Naive thymus-derived CD4-positive, alpha-beta T cell (primary cell): ENCODE measurements at regions of chr12 and their contacts with region 1.

Region 1: GRCh38 chr12:53005986-53006809 is at the start of gene EIF4B:
- DNase-seq: peak; percentile 91 to 100 (median 99)
- ATAC-seq: peak; percentile 96
- H3K4me3 ChIP-seq: peak within 1 kb of the TSS; percentile 99
- H3K4me3 Mint-ChIP-seq: peak within 1 kb of the TSS; percentile 96 to 100 (median 99)
- H3K27ac ChIP-seq: peak within 1 kb of the TSS; percentile 86
- H3K27ac Mint-ChIP-seq: peak within 1 kb of the TSS; percentile 96 to 99 (median 98)
- H3K4me1 ChIP-seq: peaks cover 32 to 36% of the 10 kb centered on the region in 2 donors
- H3K4me1 Mint-ChIP-seq: peaks cover 26 to 59% (median 46%) of the 10 kb centered on the region in 7 donors
- H3K27me3 ChIP-seq: no peaks in the 10 kb centered on the region
- H3K27me3 Mint-ChIP-seq: peaks cover 0 to 9% (median 0%) of the 10 kb centered on the region in 5 donors
- total RNA-seq, gene EIF4B: 380 to 919 (median 833) TPM

Region 2: DNA sequence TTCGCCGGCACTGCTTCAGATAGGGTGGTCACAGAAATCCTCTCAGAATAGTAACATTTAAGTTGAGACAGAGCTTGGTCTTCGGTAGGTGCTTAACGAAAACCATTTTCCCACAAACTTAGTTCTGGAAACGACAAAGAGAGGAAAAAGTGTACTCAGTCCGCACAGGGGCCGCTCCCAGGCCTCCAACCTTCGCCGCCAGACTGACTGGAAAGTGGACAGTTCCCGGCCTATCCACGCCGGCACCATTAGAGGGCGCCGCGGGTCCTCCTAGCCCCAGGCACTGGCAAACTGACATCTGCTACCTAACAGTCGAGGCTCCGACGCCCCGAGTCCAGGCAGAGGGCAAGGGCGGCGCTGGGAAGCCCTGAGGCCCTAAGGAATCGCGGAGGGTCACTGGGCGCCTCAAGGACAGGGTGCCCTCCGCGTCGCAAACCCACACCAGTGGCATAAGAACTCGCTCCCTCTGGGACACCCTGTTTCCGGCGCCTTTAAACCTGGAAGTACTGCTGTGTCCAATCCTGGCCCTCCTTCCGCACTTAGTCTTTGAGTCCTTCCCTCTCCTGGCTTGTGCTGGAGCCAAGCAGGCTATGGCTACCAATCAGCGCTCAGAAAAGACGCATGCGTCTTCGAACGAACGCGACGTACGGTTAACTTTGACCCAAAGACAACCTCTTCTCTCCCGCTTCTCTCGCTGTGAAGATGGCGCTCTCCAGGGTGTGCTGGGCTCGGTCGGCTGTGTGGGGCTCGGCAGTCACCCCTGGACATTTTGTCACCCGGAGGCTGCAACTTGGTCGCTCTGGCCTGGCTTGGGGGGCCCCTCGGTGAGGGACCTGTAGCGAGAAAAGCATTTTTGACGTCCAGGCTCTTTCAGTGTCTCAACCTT is 1958.3 kb before region 1 on chr12 and contains the start of gene LETMD1:
- CTCF ChIA-PET with region 1: no interaction called
- POLR2A ChIA-PET with region 1: no interaction called
- intact Hi-C with region 1: loop called in 1 of 2 experiments (anchors 10 kb)
- DNase-seq: peak; percentile 81 to 96 (median 95)
- ATAC-seq: peak; percentile 97
- H3K4me3 ChIP-seq: peak within 1 kb of the TSS; percentile 75
- H3K4me3 Mint-ChIP-seq: peak within 1 kb of the TSS; percentile 93 to 98 (median 96)
- H3K27ac ChIP-seq: peak within 1 kb of the TSS; percentile 81
- H3K27ac Mint-ChIP-seq: peak within 1 kb of the TSS; percentile 93 to 99 (median 96)
- H3K4me1 ChIP-seq: peaks cover 20 to 23% of the 10 kb centered on the region in 2 donors
- H3K4me1 Mint-ChIP-seq: peaks cover 15 to 44% (median 36%) of the 10 kb centered on the region in 7 donors
- H3K27me3 ChIP-seq: no peaks in the 10 kb centered on the region
- H3K27me3 Mint-ChIP-seq: no peaks in the 10 kb centered on the region
- total RNA-seq, gene LETMD1: 58.8 to 101 (median 77.0) TPM

Region 3: GRCh38 chr12:52050761-52051541 is 955.2 kb before region 1 on chr12 and contains the start of gene NR4A1:
- CTCF ChIA-PET with region 1: no interaction called
- POLR2A ChIA-PET with region 1: no interaction called
- intact Hi-C with region 1: loop called in 1 of 2 experiments (anchors 5 kb)
- DNase-seq: peak; percentile 98 to 100 (median 99)
- ATAC-seq: peak; percentile 96
- H3K4me3 ChIP-seq: peak within 1 kb of the TSS; percentile 71
- H3K4me3 Mint-ChIP-seq: peak within 1 kb of the TSS; percentile 90 to 98 (median 94)
- H3K27ac ChIP-seq: peak within 1 kb of the TSS; percentile 93
- H3K27ac Mint-ChIP-seq: peak within 1 kb of the TSS; percentile 59 to 100 (median 99)
- H3K4me1 ChIP-seq: peaks cover 21 to 22% of the 10 kb centered on the region in 2 donors
- H3K4me1 Mint-ChIP-seq: peaks cover 23 to 41% (median 37%) of the 10 kb centered on the region in 7 donors
- H3K27me3 ChIP-seq: no peaks in the 10 kb centered on the region
- H3K27me3 Mint-ChIP-seq: peaks cover 0 to 9% (median 0%) of the 10 kb centered on the region in 5 donors
- total RNA-seq, gene NR4A1: 0.89 to 279 (median 7.1) TPM

Region 4: GRCh38 chr12:52789637-52790426 is 216.4 kb before region 1 on chr12:
- CTCF ChIA-PET with region 1: no interaction called
- POLR2A ChIA-PET with region 1: no interaction called
- intact Hi-C with region 1: no loop called
- DNase-seq: peak in 1 of 9 donors; percentile 5
- ATAC-seq: no peak
- H3K4me3 ChIP-seq: no peak overlapping the region
- H3K4me3 Mint-ChIP-seq: peak overlapping the region in 8 of 10 donors; percentile 5 to 65 (median 50)
- H3K27ac ChIP-seq: no peak overlapping the region
- H3K27ac Mint-ChIP-seq: peak overlapping the region in 2 of 9 donors; percentile 28 to 62
- H3K4me1 ChIP-seq: peaks cover 0 to 5% of the 10 kb centered on the region in 2 donors
- H3K4me1 Mint-ChIP-seq: peaks cover 8 to 36% (median 26%) of the 10 kb centered on the region in 7 donors
- H3K27me3 ChIP-seq: no peaks in the 10 kb centered on the region
- H3K27me3 Mint-ChIP-seq: peaks cover 20 to 54% (median 27%) of the 10 kb centered on the region in 5 donors

Region 5: GRCh38 chr12:52942066-52942900 is 63.9 kb before region 1 on chr12:
- CTCF ChIA-PET with region 1: no interaction called
- POLR2A ChIA-PET with region 1: no interaction called
- intact Hi-C with region 1: no loop called
- DNase-seq: no peak
- ATAC-seq: no peak
- H3K4me3 ChIP-seq: no peak overlapping the region
- H3K4me3 Mint-ChIP-seq: no peak overlapping the region
- H3K27ac ChIP-seq: no peak overlapping the region
- H3K27ac Mint-ChIP-seq: no peak overlapping the region
- H3K4me1 ChIP-seq: no peaks in the 10 kb centered on the region
- H3K4me1 Mint-ChIP-seq: no peaks in the 10 kb centered on the region
- H3K27me3 ChIP-seq: no peaks in the 10 kb centered on the region
- H3K27me3 Mint-ChIP-seq: peaks cover 0 to 28% (median 5%) of the 10 kb centered on the region in 5 donors

Region 6: DNA sequence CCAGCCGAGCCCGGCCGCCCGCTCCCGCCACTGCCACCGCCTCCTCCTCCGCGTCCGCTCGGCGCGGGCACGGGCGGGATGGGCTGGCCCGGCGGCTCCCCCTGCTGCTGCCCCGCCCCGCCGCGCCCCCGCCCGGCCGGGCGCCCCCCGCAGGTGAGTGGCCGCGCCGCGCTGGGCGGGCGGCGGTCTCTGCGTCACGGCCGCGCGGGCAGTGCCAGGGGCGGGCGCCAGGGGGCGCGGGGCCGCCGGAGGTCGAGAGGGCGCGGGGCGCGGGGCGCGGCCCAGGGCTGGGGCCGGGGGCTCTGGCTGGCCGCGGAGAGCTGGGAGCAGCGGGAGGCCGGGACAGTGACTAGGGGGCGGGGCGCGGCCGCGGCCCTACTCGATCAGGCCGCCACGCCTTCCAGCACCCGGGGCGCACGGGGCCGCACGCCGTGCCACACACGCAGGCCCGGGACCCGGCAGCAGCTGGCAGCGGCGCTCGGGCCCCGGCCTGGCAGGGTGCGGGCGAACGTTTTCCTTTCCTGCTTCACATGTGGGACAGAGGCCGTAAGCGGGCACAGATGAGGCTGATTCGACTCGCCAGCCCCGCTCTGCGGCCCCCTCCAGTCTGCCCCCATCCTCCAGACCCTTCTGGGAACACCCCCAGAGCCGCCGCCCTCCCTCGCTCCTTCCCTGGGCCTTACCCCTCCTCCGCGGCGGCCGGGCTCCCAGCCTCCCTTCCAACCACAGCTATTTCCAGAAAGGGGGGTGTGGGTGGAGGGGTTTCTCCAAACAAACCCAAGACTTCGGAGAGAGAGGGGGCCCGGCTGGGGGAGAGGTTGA is 41.2 kb after region 1 on chr12:
- CTCF ChIA-PET with region 1: no interaction called
- POLR2A ChIA-PET with region 1: interaction called, 16 read pairs
- intact Hi-C with region 1: loop called in 1 of 2 experiments (anchors 1 kb)
- DNase-seq: peak; percentile 53 to 86 (median 70)
- ATAC-seq: peak; percentile 91
- H3K4me3 ChIP-seq: peak overlapping the region; percentile 82
- H3K4me3 Mint-ChIP-seq: peak overlapping the region in 9 of 10 donors; percentile 43 to 95 (median 76)
- H3K27ac ChIP-seq: peak overlapping the region; percentile 78
- H3K27ac Mint-ChIP-seq: peak overlapping the region in 6 of 9 donors; percentile 12 to 92 (median 82)
- H3K4me1 ChIP-seq: peaks cover 7 to 9% of the 10 kb centered on the region in 2 donors
- H3K4me1 Mint-ChIP-seq: peaks cover 0 to 24% (median 13%) of the 10 kb centered on the region in 7 donors
- H3K27me3 ChIP-seq: no peaks in the 10 kb centered on the region
- H3K27me3 Mint-ChIP-seq: peaks cover 0 to 13% (median 0%) of the 10 kb centered on the region in 5 donors

Region 7: DNA sequence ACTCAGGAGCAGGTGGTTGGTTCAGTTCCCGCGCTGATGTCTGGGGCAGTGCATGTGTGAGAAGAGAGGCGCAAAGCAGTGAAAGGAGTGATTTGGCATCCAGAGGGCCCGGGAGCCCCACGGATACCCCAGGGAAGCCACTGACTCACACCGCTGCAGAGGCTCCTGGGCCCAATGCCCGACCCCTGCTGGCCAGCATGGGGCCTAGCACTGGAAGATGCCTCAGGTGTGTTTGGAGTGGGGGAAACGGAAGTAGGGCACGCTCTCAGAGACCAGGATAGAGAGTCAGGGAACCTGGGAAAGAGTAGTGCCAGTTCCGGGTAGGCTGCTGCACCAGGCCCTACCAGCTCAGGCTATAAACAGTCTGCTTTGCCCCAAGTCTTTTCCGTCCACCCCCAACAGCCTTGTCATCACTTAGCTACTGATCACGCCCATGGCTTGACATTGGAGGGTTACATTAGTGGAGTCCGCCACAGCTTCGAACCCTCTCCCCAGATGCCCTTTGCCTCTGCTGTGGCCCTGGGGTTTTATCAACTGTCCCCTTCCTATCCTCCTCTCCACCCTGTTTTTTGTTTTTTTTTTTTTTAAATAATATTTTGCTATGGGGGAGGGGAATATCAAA is 184.0 kb after region 1 on chr12:
- CTCF ChIA-PET with region 1: no interaction called
- POLR2A ChIA-PET with region 1: no interaction called
- intact Hi-C with region 1: no loop called
- DNase-seq: peak in 7 of 9 donors; percentile 42 to 57 (median 52)
- ATAC-seq: peak; percentile 85
- H3K4me3 ChIP-seq: no peak overlapping the region
- H3K4me3 Mint-ChIP-seq: peak overlapping the region in 1 of 10 donors; percentile 25
- H3K27ac ChIP-seq: peak overlapping the region; percentile 37
- H3K27ac Mint-ChIP-seq: peak overlapping the region in 8 of 9 donors; percentile 36 to 89 (median 68)
- H3K4me1 ChIP-seq: peaks cover 0 to 11% of the 10 kb centered on the region in 2 donors
- H3K4me1 Mint-ChIP-seq: peaks cover 9 to 55% (median 30%) of the 10 kb centered on the region in 7 donors
- H3K27me3 ChIP-seq: no peaks in the 10 kb centered on the region
- H3K27me3 Mint-ChIP-seq: no peaks in the 10 kb centered on the region

Region 8: DNA sequence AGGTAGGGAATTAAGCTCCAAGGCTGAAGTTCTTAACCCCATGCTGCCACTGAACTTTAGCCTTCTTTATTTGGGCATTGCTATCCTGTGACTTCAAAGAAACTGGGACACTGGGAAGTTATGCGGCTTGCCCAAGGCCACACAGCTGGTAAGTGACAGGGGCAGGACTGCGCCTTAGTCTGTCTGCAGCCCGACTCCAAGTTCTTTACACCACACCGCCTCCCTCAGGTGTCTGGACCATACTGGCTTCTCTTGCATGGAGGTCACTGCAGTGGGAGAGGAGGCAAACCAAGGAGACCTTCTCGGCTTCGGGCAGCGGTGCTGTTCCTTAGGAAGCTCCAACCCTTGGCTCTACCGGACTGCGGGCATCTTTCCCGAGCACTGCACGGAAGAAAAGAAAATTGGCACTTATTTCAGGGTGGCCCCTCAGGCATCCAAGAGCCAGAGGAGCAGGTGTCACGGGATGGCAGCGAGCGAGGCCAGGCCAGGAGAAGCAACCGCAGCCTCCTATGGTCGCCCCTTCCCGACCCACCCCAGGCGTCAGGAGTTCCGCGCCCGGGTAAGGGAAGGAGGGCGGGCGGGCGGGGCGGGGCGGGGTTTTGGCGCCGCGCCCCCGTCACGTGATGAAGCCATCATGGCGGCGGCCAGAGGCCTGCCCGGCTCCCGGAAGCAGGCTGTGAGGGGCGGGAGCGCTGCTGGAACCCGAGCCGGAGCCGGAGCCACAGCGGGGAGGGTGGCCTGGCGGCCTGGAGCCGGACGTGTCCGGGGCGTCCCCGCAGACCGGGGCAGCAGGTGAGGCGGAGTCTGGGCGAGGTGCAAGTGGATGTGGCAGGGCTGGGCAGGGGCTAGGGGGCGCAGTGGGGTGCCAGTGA is 245.5 kb after region 1 on chr12:
- CTCF ChIA-PET with region 1: no interaction called
- POLR2A ChIA-PET with region 1: no interaction called
- intact Hi-C with region 1: loop called in 1 of 2 experiments (anchors 5 kb)
- DNase-seq: peak; percentile 58 to 81 (median 69)
- ATAC-seq: peak; percentile 90
- H3K4me3 ChIP-seq: peak overlapping the region; percentile 95
- H3K4me3 Mint-ChIP-seq: peak overlapping the region; percentile 89 to 98 (median 96)
- H3K27ac ChIP-seq: peak overlapping the region; percentile 95
- H3K27ac Mint-ChIP-seq: peak overlapping the region; percentile 84 to 97 (median 94)
- H3K4me1 ChIP-seq: peaks cover 26 to 38% of the 10 kb centered on the region in 2 donors
- H3K4me1 Mint-ChIP-seq: peaks cover 37 to 59% (median 48%) of the 10 kb centered on the region in 7 donors
- H3K27me3 ChIP-seq: no peaks in the 10 kb centered on the region
- H3K27me3 Mint-ChIP-seq: no peaks in the 10 kb centered on the region

Region 9: DNA sequence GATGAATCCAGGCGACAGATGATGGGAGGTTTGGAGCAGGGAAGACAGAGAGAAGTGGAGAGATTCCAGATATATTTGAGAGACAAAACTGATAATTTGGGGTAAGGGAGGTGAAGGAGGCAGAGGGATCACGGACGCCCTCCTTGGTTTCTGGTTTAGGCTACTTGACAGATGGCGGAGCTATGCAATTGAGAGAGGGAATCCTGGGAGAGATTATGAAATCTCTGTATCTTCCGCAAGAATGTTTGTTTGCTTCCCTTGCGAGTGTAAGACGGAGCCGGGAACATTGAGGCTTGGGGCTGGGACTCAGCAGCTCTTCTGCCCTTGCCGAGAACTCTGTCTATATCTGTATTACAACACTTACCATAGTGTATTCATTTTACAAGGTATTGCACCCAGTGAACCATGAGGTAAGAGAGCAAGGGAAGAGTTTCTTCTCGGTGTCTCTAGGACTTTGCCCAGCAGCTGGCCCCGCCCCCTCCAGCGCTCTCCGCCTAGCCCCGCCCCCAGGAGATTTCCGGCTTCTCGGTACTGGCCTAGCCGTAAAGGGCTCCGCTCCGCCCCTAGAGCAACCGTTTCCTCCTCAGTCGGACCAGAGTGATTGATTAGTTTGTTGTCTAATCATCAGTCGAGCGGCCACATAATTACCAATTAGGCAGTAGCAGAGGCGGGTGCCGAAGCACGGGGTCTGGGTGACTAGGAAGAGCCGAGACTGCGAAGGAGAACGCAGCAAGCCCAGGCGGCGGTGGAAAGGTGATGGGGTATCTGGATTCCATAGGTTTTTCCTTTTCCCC is 435.0 kb after region 1 on chr12 and contains the start of gene PRR13:
- CTCF ChIA-PET with region 1: no interaction called
- POLR2A ChIA-PET with region 1: no interaction called
- intact Hi-C with region 1: loop called in 1 of 2 experiments (anchors 2 kb)
- DNase-seq: peak; percentile 90 to 99 (median 96)
- ATAC-seq: peak; percentile 99
- H3K4me3 ChIP-seq: peak within 1 kb of the TSS; percentile 93
- H3K4me3 Mint-ChIP-seq: peak within 1 kb of the TSS; percentile 89 to 99 (median 96)
- H3K27ac ChIP-seq: peak within 1 kb of the TSS; percentile 92
- H3K27ac Mint-ChIP-seq: peak within 1 kb of the TSS; percentile 91 to 97 (median 97)
- H3K4me1 ChIP-seq: peaks cover 18 to 24% of the 10 kb centered on the region in 2 donors
- H3K4me1 Mint-ChIP-seq: peaks cover 30 to 52% (median 43%) of the 10 kb centered on the region in 7 donors
- H3K27me3 ChIP-seq: no peaks in the 10 kb centered on the region
- H3K27me3 Mint-ChIP-seq: no peaks in the 10 kb centered on the region
- total RNA-seq, gene PRR13: 147 to 215 (median 201) TPM

Region 10: GRCh38 chr12:53675651-53676453 is 669.7 kb after region 1 on chr12 and contains the start of gene ATP5MC2:
- CTCF ChIA-PET with region 1: no interaction called
- POLR2A ChIA-PET with region 1: interaction called, 3 read pairs
- intact Hi-C with region 1: loop called (anchors 1 to 2 kb)
- DNase-seq: peak; percentile 92 to 98 (median 97)
- ATAC-seq: peak; percentile 97
- H3K4me3 ChIP-seq: peak within 1 kb of the TSS; percentile 64
- H3K4me3 Mint-ChIP-seq: peak within 1 kb of the TSS; percentile 91 to 99 (median 94)
- H3K27ac ChIP-seq: peak within 1 kb of the TSS; percentile 76
- H3K27ac Mint-ChIP-seq: peak within 1 kb of the TSS; percentile 91 to 98 (median 95)
- H3K4me1 ChIP-seq: peaks cover 7 to 21% of the 10 kb centered on the region in 2 donors
- H3K4me1 Mint-ChIP-seq: peaks cover 21 to 38% (median 32%) of the 10 kb centered on the region in 7 donors
- H3K27me3 ChIP-seq: no peaks in the 10 kb centered on the region
- H3K27me3 Mint-ChIP-seq: peaks cover 16 to 35% (median 21%) of the 10 kb centered on the region in 5 donors
- total RNA-seq, gene ATP5MC2: 237 to 332 (median 275) TPM